HepG2 (cell line): ENCODE measurements at regions of chr1 and their contacts with region 1.

Region 1: GRCh38 chr1:174159252-174160108 is at the start of gene RABGAP1L:
- DNase-seq: peak; percentile 84
- ATAC-seq: peak; percentile 92
- H3K4me3 ChIP-seq: peak within 1 kb of the TSS; percentile 71 to 89 (median 79)
- H3K27ac ChIP-seq: peak within 1 kb of the TSS; percentile 94
- H3K4me1 ChIP-seq: peaks cover 37% of the 10 kb centered on the region
- H3K27me3 ChIP-seq: no peaks in the 10 kb centered on the region
- CTCF ChIP-seq: no peak; the same call in 1 of the 2 replicates
- EP300 ChIP-seq: no peak
- POLR2A ChIP-seq: peak; percentile 61 to 64; a peak in 2 of 4 replicates
- RAD21 ChIP-seq: 0 out of 2 replicates have a peak, but pooled peaks have one; percentile 9
- total RNA-seq, gene RABGAP1L: 22.6 and 27.8 TPM in 2 replicates

Region 2: DNA sequence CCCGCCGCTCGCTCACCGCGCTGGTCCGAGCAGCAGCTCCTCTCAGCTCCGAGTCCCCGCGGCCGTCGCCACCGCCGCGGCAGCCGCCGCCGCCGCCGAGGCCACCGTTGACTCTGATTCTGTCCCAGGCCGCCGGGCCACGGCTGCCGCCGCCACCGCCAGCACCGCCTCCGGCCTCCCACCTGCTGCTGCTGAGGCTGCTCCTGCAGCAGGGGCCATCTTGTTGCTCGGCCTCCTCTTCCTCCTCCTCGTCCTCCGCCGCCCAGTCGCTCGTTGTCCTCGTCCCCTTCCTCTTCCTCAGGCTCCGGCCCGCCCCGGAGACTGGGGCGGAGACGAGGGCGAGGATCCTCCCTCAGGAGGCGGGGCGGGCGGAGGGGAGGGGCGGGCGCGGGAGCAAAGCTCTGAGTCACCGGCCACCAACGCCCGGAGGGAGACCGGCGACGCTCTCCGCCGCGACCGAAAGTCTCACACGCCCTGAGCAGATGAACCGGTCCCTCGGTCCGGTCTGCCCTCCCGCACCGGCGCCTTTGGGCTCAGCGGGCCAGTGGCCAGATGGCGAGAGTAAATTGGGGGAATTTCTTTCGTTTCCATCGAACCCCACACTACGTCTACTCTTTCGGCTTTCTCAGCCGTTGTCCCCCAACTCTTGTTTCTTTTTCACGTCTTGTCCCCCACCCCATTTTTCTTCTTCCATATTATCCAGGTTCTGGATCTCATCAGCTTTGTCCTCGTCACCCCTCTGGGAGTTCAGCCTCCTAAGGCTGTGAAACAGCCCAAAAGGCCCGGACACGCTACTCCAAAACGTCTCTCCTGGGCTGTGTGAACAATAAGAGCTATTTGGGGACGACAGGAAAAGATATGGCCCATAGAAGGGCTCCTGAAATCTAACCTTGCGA is 137.2 kb before region 1 on chr1 and contains the start of gene RC3H1:
- CTCF ChIA-PET with region 1: no interaction called
- POLR2A ChIA-PET with region 1: no interaction called
- in situ Hi-C with region 1: no loop called
- intact Hi-C with region 1: loop called (anchors 10 kb)
- DNase-seq: peak; percentile 80
- ATAC-seq: peak; percentile 91
- H3K4me3 ChIP-seq: peak within 1 kb of the TSS; percentile 75 to 97 (median 93)
- H3K27ac ChIP-seq: peak within 1 kb of the TSS; percentile 84
- H3K4me1 ChIP-seq: peaks cover 43% of the 10 kb centered on the region
- H3K27me3 ChIP-seq: no peaks in the 10 kb centered on the region; a peak in 1 of 5 replicates
- CTCF ChIP-seq: no peak
- EP300 ChIP-seq: 0 out of 4 replicates have a peak, but pooled peaks of 1 of the 2 experiments have one; percentile 32
- POLR2A ChIP-seq: peak; percentile 85 to 97
- RAD21 ChIP-seq: no peak
- total RNA-seq, gene RC3H1: 19.6 and 24.4 TPM in 2 replicates

Region 3: DNA sequence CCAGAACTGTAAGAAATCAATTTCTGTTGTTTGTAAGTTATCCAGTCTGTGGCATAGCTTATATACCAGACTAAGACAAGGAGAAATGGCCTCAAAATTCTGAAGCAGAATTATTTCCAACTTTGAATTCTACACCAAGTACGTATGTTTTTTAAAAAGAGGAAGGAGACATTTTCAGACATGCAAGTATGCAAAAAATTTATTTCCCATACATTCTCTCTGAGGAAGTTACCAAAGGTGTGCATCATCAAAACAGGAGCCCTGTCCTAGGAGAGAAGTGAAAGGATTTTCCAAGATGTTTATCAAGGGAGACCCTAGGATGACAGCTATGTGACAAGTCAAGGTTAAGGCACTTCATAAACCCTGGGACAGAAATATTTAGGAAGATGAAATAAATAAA is 49.4 kb before region 1 on chr1:
- CTCF ChIA-PET with region 1: no interaction called
- POLR2A ChIA-PET with region 1: no interaction called
- in situ Hi-C with region 1: no loop called
- intact Hi-C with region 1: no loop called
- DNase-seq: no peak
- ATAC-seq: no peak
- H3K4me3 ChIP-seq: no peak overlapping the region
- H3K27ac ChIP-seq: no peak overlapping the region
- H3K4me1 ChIP-seq: peaks cover 5% of the 10 kb centered on the region
- H3K27me3 ChIP-seq: no peaks in the 10 kb centered on the region
- CTCF ChIP-seq: no peak
- EP300 ChIP-seq: no peak
- POLR2A ChIP-seq: no peak
- RAD21 ChIP-seq: no peak

Region 4: GRCh38 chr1:174131021-174131638 is 28.4 kb before region 1 on chr1:
- CTCF ChIA-PET with region 1: no interaction called
- POLR2A ChIA-PET with region 1: no interaction called
- in situ Hi-C with region 1: no loop called
- intact Hi-C with region 1: no loop called
- DNase-seq: no peak
- ATAC-seq: no peak
- H3K4me3 ChIP-seq: no peak overlapping the region
- H3K27ac ChIP-seq: no peak overlapping the region
- H3K4me1 ChIP-seq: no peaks in the 10 kb centered on the region
- H3K27me3 ChIP-seq: peaks cover 0 to 2% of the 10 kb centered on the region in 2 experiments; a peak in 1 of 5 replicates
- CTCF ChIP-seq: no peak
- EP300 ChIP-seq: no peak
- POLR2A ChIP-seq: no peak
- RAD21 ChIP-seq: no peak

Region 5: DNA sequence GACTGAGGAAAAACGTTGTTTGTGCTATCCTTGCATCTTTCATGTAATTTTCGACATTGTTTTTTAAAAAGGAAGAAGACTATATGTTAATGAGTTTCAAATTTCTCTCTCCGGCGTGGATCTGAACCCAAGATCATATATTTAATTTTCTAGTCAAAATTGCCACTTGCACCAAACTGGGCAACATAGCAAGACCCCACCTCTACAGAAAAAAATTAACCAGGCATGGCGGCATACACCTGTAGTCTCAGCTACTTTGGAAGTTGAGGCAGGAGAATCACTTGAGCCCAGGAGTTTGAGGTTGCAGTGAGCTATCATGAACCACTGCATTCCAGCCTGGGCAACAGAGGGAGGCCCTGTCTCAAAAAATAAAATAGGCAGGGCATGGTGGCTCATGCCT is 16.6 kb before region 1 on chr1:
- CTCF ChIA-PET with region 1: no interaction called
- POLR2A ChIA-PET with region 1: no interaction called
- in situ Hi-C with region 1: no loop called
- intact Hi-C with region 1: no loop called
- DNase-seq: no peak
- ATAC-seq: no peak
- H3K4me3 ChIP-seq: no peak overlapping the region
- H3K27ac ChIP-seq: no peak overlapping the region
- H3K4me1 ChIP-seq: peaks cover 9% of the 10 kb centered on the region
- H3K27me3 ChIP-seq: no peaks in the 10 kb centered on the region
- CTCF ChIP-seq: no peak
- EP300 ChIP-seq: no peak
- POLR2A ChIP-seq: no peak
- RAD21 ChIP-seq: no peak

Region 6: GRCh38 chr1:174222166-174222949 is 62.9 kb after region 1 on chr1:
- CTCF ChIA-PET with region 1: no interaction called
- POLR2A ChIA-PET with region 1: no interaction called
- in situ Hi-C with region 1: no loop called
- intact Hi-C with region 1: no loop called
- DNase-seq: no peak
- ATAC-seq: no peak
- H3K4me3 ChIP-seq: no peak overlapping the region
- H3K27ac ChIP-seq: no peak overlapping the region
- H3K4me1 ChIP-seq: peaks cover 9% of the 10 kb centered on the region
- H3K27me3 ChIP-seq: no peaks in the 10 kb centered on the region
- CTCF ChIP-seq: no peak
- EP300 ChIP-seq: no peak
- POLR2A ChIP-seq: no peak
- RAD21 ChIP-seq: no peak